Brain microvascular endothelial cell (primary cell): ENCODE measurements at regions of chr2 and their contacts with region 1.

Region 1: GRCh38 chr2:64873472-64873924 is 115.7 kb upstream of the SLC1A4 start:
- DNase-seq: peak; percentile 56
- H3K4me3 ChIP-seq: no peak overlapping the region
- H3K27ac ChIP-seq: no peak overlapping the region
- H3K27me3 ChIP-seq: peaks cover 31% of the 10 kb centered on the region
- CTCF ChIP-seq: peak; percentile 99

Region 2: GRCh38 chr2:64653349-64654062 is 220.0 kb before region 1 on chr2 and contains the start of gene SERTAD2:
- in situ Hi-C with region 1: loop called (anchors 25 kb)
- DNase-seq: peak; percentile 72
- H3K4me3 ChIP-seq: peak within 1 kb of the TSS; percentile 74
- H3K27ac ChIP-seq: peak within 1 kb of the TSS; percentile 82
- H3K27me3 ChIP-seq: no peaks in the 10 kb centered on the region
- CTCF ChIP-seq: peak; percentile 31

Region 3: DNA sequence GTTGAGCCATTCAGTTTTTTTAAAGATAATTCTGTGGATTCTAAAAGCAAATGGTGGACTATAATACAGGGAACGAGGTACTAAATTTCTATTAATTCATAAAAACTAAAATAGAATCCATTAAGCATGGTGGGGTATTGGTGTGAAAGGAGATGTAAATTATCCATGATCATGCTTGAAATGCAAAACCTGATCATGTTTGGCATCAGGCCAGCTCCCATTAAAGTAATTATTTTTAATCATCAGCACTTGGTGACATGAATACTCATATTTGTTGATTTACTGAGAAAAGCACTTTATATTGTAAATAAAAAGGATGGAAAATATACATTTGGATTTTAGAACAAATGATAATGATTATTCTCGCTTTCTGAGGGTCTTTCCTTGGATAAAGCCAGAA is 1329.1 kb after region 1 on chr2:
- in situ Hi-C with region 1: no loop called
- DNase-seq: no peak
- H3K4me3 ChIP-seq: no peak overlapping the region
- H3K27ac ChIP-seq: no peak overlapping the region
- H3K27me3 ChIP-seq: no peaks in the 10 kb centered on the region
- CTCF ChIP-seq: no peak